ENCODE measurements at regions of chr3 and their contacts with region 1.

Region 1: DNA sequence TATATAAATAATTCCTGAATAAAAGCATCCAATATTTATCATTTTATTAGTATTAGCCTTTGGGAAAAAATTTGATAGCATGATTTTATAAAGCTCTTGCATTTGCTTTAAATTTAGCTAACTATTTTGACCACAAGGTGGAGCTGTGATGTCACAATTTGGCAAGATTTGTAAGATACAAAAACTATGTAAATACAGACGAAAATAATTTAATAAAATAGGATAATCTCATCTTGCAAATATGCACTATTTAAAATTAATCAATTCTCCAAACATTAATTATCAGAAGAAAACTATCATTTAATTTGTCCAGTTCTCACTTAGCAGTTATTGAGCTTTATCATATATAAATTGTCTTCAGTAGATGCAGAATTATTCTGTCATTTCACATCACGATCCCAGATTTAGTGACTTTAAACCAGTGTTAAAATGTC is 95.4 kb downstream of the PLOD2 start:
- DNase-seq: no peak
- ATAC-seq: peak in 2 of 4 donors; percentile 45 to 56
- H3K4me3 ChIP-seq: no peak overlapping the region
- H3K27ac ChIP-seq: no peak overlapping the region
- H3K4me1 ChIP-seq: no peaks in the 10 kb centered on the region
- H3K27me3 ChIP-seq: no peaks in the 10 kb centered on the region
- CTCF ChIP-seq: peak; percentile 65 to 81 (median 74)
- POLR2A ChIP-seq: no peak

Region 2: DNA sequence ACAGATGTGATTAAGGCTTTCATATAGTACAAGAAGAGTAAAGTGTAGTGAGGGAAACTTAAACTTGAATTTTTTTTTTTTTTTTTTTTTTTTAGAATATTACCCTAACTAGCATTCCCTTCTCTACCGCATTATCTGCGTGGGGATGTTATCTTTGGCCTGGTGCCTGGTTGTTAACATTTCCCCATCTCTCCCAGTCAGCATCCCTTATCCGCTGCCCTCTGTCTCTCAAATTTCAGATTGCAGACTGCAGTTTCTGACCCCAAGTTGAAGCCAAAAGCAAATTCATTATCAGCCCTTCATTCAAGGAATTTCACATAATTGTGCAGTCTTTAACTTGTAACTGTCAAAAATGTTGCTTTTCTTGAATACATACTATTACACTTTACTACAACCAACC is 257.6 kb before region 1 on chr3:
- intact Hi-C with region 1: no loop called
- DNase-seq: peak in 1 of 3 donors; percentile 49
- ATAC-seq: peak; percentile 62 to 84 (median 83)
- H3K4me3 ChIP-seq: no peak overlapping the region
- H3K27ac ChIP-seq: no peak overlapping the region
- H3K4me1 ChIP-seq: no peaks in the 10 kb centered on the region
- H3K27me3 ChIP-seq: no peaks in the 10 kb centered on the region
- CTCF ChIP-seq: peak; percentile 22 to 45 (median 30)
- POLR2A ChIP-seq: no peak

Region 3: GRCh38 chr3:146020986-146021385 is 44.6 kb before region 1 on chr3:
- intact Hi-C with region 1: no loop called
- DNase-seq: no peak
- ATAC-seq: no peak
- H3K4me3 ChIP-seq: no peak overlapping the region
- H3K27ac ChIP-seq: no peak overlapping the region
- H3K4me1 ChIP-seq: no peaks in the 10 kb centered on the region
- H3K27me3 ChIP-seq: no peaks in the 10 kb centered on the region
- CTCF ChIP-seq: no peak
- POLR2A ChIP-seq: no peak

Region 4: GRCh38 chr3:146125951-146126350 is 60.4 kb after region 1 on chr3:
- intact Hi-C with region 1: no loop called
- DNase-seq: no peak
- ATAC-seq: peak; percentile 34 to 86 (median 61)
- H3K4me3 ChIP-seq: no peak overlapping the region
- H3K27ac ChIP-seq: peak overlapping the region in 2 of 3 donors; percentile 12 to 45
- H3K4me1 ChIP-seq: peaks cover 0 to 23% (median 12%) of the 10 kb centered on the region in 4 donors
- H3K27me3 ChIP-seq: no peaks in the 10 kb centered on the region
- CTCF ChIP-seq: no peak
- POLR2A ChIP-seq: no peak

Region 5: GRCh38 chr3:146189519-146190173 is 124.1 kb after region 1 on chr3:
- intact Hi-C with region 1: loop called in 1 of 2 experiments (anchors 10 kb)
- DNase-seq: no peak
- ATAC-seq: peak; percentile 92 to 97 (median 95)
- H3K4me3 ChIP-seq: no peak overlapping the region
- H3K27ac ChIP-seq: no peak overlapping the region
- H3K4me1 ChIP-seq: no peaks in the 10 kb centered on the region
- H3K27me3 ChIP-seq: no peaks in the 10 kb centered on the region
- CTCF ChIP-seq: peak; percentile 68 to 82 (median 74)
- POLR2A ChIP-seq: no peak

Region 6: GRCh38 chr3:146431240-146431639 is 365.6 kb after region 1 on chr3:
- intact Hi-C with region 1: no loop called
- DNase-seq: no peak
- ATAC-seq: no peak
- H3K4me3 ChIP-seq: no peak overlapping the region
- H3K27ac ChIP-seq: no peak overlapping the region
- H3K4me1 ChIP-seq: no peaks in the 10 kb centered on the region
- H3K27me3 ChIP-seq: no peaks in the 10 kb centered on the region
- CTCF ChIP-seq: no peak
- POLR2A ChIP-seq: no peak